ENCODE measurements at regions of chr3 and their contacts with region 1.

Region 1: DNA sequence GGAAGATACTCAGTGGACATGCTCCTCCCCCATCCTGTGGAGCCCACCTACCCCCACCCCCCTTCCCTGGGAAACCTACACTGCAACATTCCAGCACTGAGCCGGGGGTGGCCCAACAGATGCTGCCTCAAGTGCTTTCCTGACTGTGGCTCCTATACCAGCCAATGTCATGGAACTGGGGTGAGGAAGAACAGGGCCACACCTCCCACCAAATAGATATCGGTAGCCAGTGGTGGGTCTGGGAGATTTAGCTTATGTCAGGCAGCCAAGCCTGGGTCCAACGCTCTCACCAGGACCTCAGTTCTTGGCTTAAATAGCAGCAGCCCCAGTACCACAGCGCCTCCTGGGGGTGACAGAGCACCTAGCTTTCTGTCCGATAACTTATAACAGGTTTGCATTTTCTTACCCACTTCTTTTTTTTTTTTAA is 30.3 kb downstream of the CDC25A start:
- DNase-seq: peak; percentile 43 to 87
- H3K4me3 ChIP-seq: no peak overlapping the region
- H3K27ac ChIP-seq: no peak overlapping the region
- H3K4me1 ChIP-seq: no peaks in the 10 kb centered on the region; a peak in 1 of 7 replicates
- H3K27me3 ChIP-seq: no peaks in the 10 kb centered on the region
- CTCF ChIP-seq: peak; percentile 79 to 80 (median 80)
- EP300 ChIP-seq: no peak
- POLR2A ChIP-seq: no peak
- RAD21 ChIP-seq: peak; percentile 71 to 77

Region 2: DNA sequence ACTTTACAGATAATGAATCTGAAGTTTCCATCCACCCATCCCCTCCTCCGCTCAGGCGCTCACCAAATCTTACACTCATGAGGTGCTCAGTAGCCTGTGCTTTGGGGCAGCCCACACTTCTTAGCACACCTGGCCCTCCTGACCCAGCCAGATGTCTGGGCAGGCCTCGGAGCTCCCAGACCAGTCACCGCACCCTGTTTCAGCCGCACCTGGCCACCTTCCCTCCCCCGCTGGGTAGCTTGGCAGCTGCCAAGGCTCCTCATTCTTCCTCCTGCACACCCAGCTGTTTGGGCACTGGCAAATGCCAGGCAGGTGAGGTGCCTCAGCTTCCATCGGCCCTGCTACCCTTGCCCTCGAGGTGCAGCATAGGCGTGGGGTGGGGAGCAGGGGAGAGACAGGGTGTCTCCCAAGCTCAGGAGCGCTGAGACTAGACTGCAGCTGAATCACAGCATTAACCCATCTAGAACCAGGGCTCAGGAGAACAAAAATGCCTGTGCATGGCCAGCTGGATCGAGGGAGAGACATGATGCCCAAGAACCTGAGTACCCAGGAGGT is 15.6 kb before region 1 on chr3:
- CTCF ChIA-PET with region 1: interaction called, 68 read pairs
- POLR2A ChIA-PET with region 1: no interaction called
- DNase-seq: no peak
- H3K4me3 ChIP-seq: no peak overlapping the region
- H3K27ac ChIP-seq: no peak overlapping the region
- H3K4me1 ChIP-seq: peaks cover 0 to 4% (median 3%) of the 10 kb centered on the region in 4 experiments; a peak in 3 of 7 replicates
- H3K27me3 ChIP-seq: no peaks in the 10 kb centered on the region
- CTCF ChIP-seq: no peak
- EP300 ChIP-seq: no peak
- POLR2A ChIP-seq: no peak
- RAD21 ChIP-seq: no peak

Region 3: GRCh38 chr3:48188266-48189201 is 30.6 kb after region 1 on chr3 and contains the start of gene CDC25A:
- CTCF ChIA-PET with region 1: interaction called, 15 read pairs
- POLR2A ChIA-PET with region 1: interaction called, 9 read pairs
- DNase-seq: peak; percentile 92 to 98
- H3K4me3 ChIP-seq: peak within 1 kb of the TSS; percentile 65 to 98 (median 87)
- H3K27ac ChIP-seq: peak within 1 kb of the TSS; percentile 74
- H3K4me1 ChIP-seq: peaks cover 0 to 12% (median 8%) of the 10 kb centered on the region in 4 experiments; a peak in 5 of 7 replicates
- H3K27me3 ChIP-seq: no peaks in the 10 kb centered on the region
- CTCF ChIP-seq: no peak
- EP300 ChIP-seq: no peak
- POLR2A ChIP-seq: peak; percentile 81 to 88
- RAD21 ChIP-seq: no peak
- total RNA-seq, gene CDC25A: 62.1 and 65.0 TPM in 2 replicates

Measured in H1 (cell line).